ENCODE measurements at regions of chr5 and their contacts with region 1.

Region 1: DNA sequence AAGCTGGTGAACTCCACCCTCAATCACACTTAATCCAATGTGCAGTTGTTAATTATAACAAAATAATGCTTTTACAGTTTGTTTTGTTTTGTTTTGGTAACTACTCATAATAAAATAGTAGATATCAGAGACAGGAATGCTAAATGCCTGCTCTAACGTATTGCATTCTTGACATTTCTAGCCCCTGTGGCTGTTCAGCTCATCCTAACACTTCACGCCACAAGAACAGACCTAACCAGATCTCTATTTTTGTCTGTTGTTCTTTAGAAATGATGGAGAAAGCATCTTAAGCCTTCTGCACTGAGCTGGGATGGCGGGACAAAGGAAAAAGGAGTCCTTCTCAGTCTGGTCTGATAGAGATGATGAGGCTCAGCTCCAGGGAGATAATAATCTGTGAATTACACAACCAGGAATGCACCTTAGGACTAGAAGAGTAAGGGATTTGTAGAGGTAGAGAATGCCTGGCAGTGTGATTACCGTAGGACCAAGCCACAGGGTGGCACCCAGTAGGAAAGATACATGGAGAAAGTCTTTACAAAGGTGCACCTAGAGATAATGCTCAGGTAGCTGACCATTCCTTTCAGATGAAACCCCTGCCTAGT is 628.8 kb downstream of the PDE4D start:
- DNase-seq: no peak
- ATAC-seq: peak in 3 of 8 donors; percentile 24 to 37 (median 31)
- H3K4me3 ChIP-seq: peak overlapping the region in 1 of 10 donors; percentile 8
- H3K27ac ChIP-seq: peak overlapping the region in 3 of 10 donors; percentile 6 to 50 (median 27)
- H3K4me1 ChIP-seq: peaks cover 0 to 41% (median 19%) of the 10 kb centered on the region in 9 donors
- H3K27me3 ChIP-seq: no peaks in the 10 kb centered on the region
- CTCF ChIP-seq: no peak

Region 2: GRCh38 chr5:59351076-59351794 is 86.5 kb after region 1 on chr5:
- intact Hi-C with region 1: loop called in 1 of 10 experiments (anchors 10 kb)
- DNase-seq: peak in 1 of 2 donors; percentile 48
- ATAC-seq: peak; percentile 84 to 96 (median 95)
- H3K4me3 ChIP-seq: peak overlapping the region in 1 of 10 donors; percentile 15
- H3K27ac ChIP-seq: peak overlapping the region in 5 of 10 donors; percentile 35 to 64 (median 57)
- H3K4me1 ChIP-seq: peaks cover 0 to 35% (median 23%) of the 10 kb centered on the region in 9 donors
- H3K27me3 ChIP-seq: no peaks in the 10 kb centered on the region
- CTCF ChIP-seq: peak in 7 of 9 donors; percentile 5 to 65 (median 45)

Region 3: DNA sequence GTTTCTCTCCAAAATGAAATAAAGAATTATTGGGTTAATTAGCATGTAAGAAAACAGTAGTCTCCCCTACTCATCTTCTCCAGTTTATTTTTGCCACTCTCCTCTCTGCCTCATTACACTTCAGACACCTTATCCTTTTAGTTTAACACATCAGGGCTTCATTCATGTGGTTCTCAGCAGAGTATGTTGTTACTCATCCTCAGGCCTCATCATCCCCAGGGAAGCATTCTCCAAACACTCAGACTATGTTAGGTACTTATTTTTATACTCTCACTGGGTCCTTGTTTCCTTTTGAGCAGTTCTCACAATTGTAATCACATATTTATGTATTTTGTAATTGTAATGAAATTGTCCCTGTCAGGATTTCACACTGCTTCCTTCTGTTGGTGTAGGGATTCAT is 158.3 kb after region 1 on chr5:
- intact Hi-C with region 1: no loop called
- DNase-seq: no peak
- ATAC-seq: no peak
- H3K4me3 ChIP-seq: no peak overlapping the region
- H3K27ac ChIP-seq: no peak overlapping the region
- H3K4me1 ChIP-seq: peaks cover 0 to 7% (median 0%) of the 10 kb centered on the region in 9 donors
- H3K27me3 ChIP-seq: no peaks in the 10 kb centered on the region
- CTCF ChIP-seq: no peak